ENCODE measurements at regions of chr10 and their contacts with region 1.

Region 1: GRCh38 chr10:122435212-122435827 is 19.1 kb upstream of the ARMS2 start:
- DNase-seq: no peak
- ATAC-seq: peak in 1 of 2 donors; percentile 39

Region 2: DNA sequence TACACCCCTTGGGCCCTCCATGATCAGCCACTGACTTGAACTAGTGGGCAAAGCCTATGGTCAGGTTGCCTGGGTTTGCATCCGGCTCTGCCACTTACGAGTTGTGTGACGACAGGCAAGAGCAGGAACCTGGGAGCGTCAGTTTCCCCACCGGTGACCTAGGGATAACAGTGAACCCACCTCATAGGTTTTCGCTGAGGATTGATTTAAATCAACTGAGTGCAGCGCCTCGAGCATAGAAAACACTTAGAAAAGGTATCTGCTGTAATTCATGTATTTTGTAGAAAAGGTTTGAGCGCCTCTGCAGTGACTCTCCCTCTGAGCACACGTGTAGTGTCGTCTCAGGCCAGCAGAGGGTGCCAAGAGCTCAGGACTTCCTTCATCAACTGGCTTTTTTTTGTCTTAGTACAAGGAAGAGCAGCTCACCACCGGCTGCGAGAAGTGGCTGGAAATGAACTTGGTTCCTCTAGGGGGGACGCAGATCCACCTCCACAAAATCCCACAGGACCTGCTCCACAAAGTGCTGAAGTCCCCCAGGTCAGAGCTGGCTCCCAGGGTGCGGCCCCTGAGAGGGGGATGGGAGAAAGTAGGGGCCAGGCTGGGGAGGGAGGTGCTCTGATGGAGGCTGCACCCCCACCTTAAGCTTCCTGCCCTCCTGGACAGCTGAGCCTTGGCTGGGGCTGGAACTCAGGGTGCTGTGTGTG is 136.6 kb before region 1 on chr10:
- intact Hi-C with region 1: loop called (anchors 1 to 5 kb)
- DNase-seq: peak; percentile 73
- ATAC-seq: peak; percentile 77 to 89

Measured in left cardiac atrium (tissue), 4 donors.